ENCODE measurements at regions of chr11 and their contacts with region 1.

Region 1: DNA sequence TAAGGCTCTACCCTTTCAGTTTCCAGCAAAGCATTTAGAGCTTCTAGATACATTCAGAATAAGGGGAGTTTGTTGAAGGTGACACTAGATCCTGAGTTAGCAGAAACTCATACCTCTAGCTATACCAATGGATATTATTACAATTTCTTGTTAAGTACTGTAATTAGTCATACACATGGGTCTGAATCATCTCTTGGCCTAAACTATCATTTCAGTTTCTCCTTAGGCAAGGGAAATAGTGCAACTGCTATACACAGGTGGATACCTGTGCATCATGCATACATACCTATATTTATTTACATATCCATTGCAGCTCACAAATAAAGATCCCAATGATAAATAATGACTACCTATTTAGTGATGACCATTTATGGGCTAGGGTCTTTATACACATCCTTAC is 45.1 kb upstream of the PAX6 start:
- DNase-seq: no peak
- H3K4me3 ChIP-seq: no peak overlapping the region
- H3K27ac ChIP-seq: no peak overlapping the region
- H3K4me1 ChIP-seq: no peaks in the 10 kb centered on the region
- H3K27me3 ChIP-seq: peaks cover 0 to 33% (median 0%) of the 10 kb centered on the region in 4 donors
- CTCF ChIP-seq: no peak
- POLR2A ChIP-seq: no peak

Region 2: DNA sequence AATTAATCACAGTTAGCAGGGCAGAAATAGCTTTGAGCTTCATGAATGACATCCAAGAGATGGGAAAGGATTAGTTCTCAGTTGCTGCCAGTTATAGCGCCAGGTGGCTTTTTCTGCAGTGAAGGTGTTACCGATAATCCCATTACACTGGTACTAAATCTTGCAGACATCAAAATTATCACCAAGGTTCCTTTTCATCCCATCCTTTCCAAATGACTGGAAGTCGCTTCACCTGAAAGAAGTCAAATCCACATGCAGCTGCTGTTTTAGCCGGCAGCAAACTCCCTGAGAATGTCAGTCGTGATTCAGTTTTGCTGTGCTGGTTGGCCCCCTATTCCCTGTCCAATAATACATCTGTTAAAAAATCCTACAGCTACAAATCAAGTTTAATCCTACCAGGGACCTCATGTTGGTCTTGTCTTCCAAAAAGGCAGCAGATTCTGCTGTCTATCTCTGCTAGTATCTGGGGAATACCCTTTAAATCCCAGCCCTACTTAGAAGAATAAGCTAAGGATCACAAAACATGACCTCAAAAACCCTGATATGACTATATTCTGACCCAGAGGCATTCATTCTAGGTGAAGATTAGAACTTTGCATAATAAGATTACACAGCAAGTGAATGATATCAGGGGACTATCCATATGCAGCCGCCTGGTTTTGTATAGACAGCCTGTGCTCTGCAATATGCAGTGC is 378.6 kb before region 1 on chr11:
- intact Hi-C with region 1: no loop called
- DNase-seq: no peak
- H3K4me3 ChIP-seq: no peak overlapping the region
- H3K27ac ChIP-seq: no peak overlapping the region
- H3K4me1 ChIP-seq: no peaks in the 10 kb centered on the region
- H3K27me3 ChIP-seq: no peaks in the 10 kb centered on the region
- CTCF ChIP-seq: no peak
- POLR2A ChIP-seq: no peak

Region 3: DNA sequence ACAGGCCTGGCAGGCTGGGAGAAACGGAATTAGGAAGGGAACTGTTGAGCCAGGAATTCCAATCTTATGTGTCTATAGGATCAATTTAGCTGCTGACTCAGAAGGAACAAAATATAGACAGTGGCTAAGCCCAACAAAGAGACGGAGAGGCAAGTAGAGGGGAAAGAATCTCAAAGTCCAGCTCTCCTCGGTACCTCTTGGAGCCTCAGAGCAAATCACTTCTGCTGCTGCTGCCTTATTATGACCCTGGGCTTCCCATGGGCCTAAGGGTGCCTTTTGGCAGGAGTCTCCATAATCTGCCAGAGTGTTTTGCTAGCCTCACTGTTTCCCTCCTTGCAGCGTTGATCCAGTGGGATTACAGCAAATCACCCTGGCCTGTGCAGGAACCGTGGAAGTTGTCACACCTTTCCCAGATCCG is 76.9 kb before region 1 on chr11:
- intact Hi-C with region 1: no loop called
- DNase-seq: no peak
- H3K4me3 ChIP-seq: no peak overlapping the region
- H3K27ac ChIP-seq: no peak overlapping the region
- H3K4me1 ChIP-seq: no peaks in the 10 kb centered on the region
- H3K27me3 ChIP-seq: no peaks in the 10 kb centered on the region
- CTCF ChIP-seq: no peak
- POLR2A ChIP-seq: no peak

Region 4: DNA sequence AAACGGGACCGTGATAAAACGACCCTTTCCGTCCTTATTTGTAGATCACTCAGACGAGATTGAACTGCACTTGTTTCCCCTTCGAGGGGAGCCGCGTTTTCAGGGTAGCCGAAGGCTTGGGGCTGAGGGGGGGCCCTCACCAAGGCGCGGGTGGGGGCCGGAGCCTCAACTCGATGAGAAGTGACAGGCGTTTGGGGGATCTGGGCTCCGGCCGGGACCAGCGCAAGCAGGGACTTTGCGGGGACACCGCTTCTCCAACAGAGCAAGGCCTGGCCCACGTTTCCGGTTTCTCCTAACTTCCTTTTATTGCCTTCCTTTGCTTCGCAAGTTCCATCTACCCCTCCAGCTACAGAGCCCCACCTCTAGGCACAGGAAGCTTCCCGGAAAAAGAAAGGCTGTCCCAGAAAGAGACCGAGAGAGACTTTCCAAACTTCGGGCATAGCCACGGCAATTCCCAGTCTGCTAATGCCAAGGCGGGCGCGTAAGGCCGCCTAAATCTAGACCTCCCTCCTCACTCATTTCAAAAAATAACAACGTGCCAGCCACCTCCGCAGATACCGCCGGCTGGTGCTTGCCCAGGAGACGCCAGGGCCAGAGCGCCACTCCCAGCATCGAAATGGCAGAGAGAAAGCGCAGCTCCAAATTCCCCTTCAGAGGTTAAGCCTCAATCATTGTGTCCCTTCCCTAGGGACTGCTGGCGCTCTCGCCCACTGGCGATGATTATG is 51.8 kb before region 1 on chr11:
- intact Hi-C with region 1: no loop called
- DNase-seq: no peak
- H3K4me3 ChIP-seq: peak overlapping the region in 1 of 4 donors; percentile 32
- H3K27ac ChIP-seq: no peak overlapping the region
- H3K4me1 ChIP-seq: peaks cover 9 to 37% (median 18%) of the 10 kb centered on the region in 3 donors
- H3K27me3 ChIP-seq: peaks cover 52 to 100% (median 88%) of the 10 kb centered on the region in 4 donors
- CTCF ChIP-seq: no peak
- POLR2A ChIP-seq: no peak

Region 5: GRCh38 chr11:32643526-32643925 is 787.3 kb after region 1 on chr11:
- intact Hi-C with region 1: loop called (anchors 10 kb)
- DNase-seq: no peak
- H3K4me3 ChIP-seq: no peak overlapping the region
- H3K27ac ChIP-seq: no peak overlapping the region
- H3K4me1 ChIP-seq: no peaks in the 10 kb centered on the region
- H3K27me3 ChIP-seq: no peaks in the 10 kb centered on the region
- CTCF ChIP-seq: no peak
- POLR2A ChIP-seq: no peak